Activated CD4-positive, alpha-beta memory T cell treated with anti-CD3 and anti-CD28 coated beads, Interleukin-2, amount 10 ng/mL, durations not matched to agents 7 days and 5 days (primary cell): ENCODE measurements at regions of chr16 and their contacts with region 1.

Region 1: GRCh38 chr16:57091975-57092785 is at the start of gene CPNE2:
- DNase-seq: peak; percentile 32
- H3K4me3 Mint-ChIP-seq: peak within 1 kb of the TSS; percentile 63
- H3K27ac Mint-ChIP-seq: no peak within 1 kb of the TSS
- H3K4me1 Mint-ChIP-seq: peaks cover 11% of the 10 kb centered on the region
- H3K27me3 Mint-ChIP-seq: peaks cover 36% of the 10 kb centered on the region
- total RNA-seq, gene CPNE2: 4.6 to 4.8 TPM

Region 2: DNA sequence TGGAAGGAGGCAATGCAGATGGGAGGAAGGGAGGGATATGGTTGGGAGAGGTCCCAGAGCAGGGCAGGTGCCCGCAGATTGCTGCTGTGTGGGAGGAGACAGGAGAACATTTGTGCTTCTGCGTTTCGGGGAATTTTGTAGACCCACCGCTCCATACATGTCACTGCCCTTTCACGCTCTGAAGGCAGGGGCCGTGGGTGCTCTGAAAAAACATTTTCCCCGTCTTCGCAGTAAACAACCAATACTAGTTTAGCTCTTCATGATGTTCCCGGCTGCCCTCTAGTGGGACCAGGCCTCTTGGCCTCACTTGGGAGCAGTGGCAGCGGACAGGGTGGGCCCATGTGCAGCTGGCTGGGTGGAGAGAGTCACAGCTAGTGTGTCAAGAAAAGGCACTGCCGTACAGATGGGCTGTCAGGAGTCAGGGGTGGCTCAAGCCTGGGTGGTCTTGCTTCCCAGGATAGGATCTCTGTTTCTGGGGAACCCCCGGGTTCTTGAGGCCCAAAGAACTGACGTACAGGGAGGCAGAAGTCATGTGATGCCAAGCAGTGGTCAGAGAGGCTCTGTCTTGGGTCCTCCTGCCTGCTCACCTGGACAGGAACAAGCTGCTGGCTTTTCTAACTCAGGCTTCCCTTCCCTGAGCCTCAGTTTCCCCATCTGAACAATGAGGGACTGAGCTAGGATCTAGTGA is 46.3 kb before region 1 on chr16:
- CTCF ChIA-PET with region 1: no interaction called
- POLR2A ChIA-PET with region 1: no interaction called
- DNase-seq: no peak
- H3K4me3 Mint-ChIP-seq: no peak overlapping the region
- H3K27ac Mint-ChIP-seq: no peak overlapping the region
- H3K4me1 Mint-ChIP-seq: peaks cover 33% of the 10 kb centered on the region
- H3K27me3 Mint-ChIP-seq: no peaks in the 10 kb centered on the region

Region 3: DNA sequence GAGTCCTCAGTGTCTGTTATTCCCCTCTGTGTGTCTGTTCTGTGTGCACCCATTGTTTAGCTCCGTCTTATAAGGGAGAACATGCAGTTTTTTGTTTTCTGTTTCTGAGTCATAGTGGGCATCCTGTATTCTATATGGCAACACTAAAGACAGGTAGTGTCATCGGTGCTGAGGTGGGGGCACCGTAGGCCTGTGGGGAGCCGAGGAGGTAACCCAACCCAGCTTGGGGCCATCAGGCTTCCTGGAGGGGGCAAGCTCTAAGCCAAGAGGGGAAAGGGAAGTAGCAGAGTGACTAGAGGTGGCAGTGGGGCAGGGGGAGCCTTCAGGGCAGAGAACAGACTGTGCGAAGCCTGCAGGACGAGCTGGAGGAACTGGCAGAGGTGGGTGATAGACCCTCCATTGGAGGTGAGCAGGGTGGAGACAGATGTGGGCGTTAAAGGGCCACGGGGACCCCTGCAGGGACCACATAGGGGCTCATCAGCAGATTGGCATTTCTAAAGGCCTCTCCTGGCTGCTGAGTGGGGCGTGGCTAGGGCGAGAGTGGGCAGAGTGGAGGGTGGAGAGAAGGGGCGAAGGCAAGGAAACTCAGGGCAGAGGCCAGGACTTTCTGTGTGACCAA is 36.7 kb after region 1 on chr16:
- CTCF ChIA-PET with region 1: interaction called, 17 read pairs
- POLR2A ChIA-PET with region 1: interaction called, 4 read pairs
- DNase-seq: peak; percentile 66
- H3K4me3 Mint-ChIP-seq: peak overlapping the region; percentile 53
- H3K27ac Mint-ChIP-seq: peak overlapping the region; percentile 80
- H3K4me1 Mint-ChIP-seq: peaks cover 78% of the 10 kb centered on the region
- H3K27me3 Mint-ChIP-seq: no peaks in the 10 kb centered on the region

Region 4: GRCh38 chr16:57167953-57168352 is 75.8 kb after region 1 on chr16:
- CTCF ChIA-PET with region 1: interaction called, 14 read pairs
- POLR2A ChIA-PET with region 1: interaction called, 3 read pairs
- DNase-seq: no peak
- H3K4me3 Mint-ChIP-seq: no peak overlapping the region
- H3K27ac Mint-ChIP-seq: no peak overlapping the region
- H3K4me1 Mint-ChIP-seq: peaks cover 3% of the 10 kb centered on the region
- H3K27me3 Mint-ChIP-seq: no peaks in the 10 kb centered on the region